ENCODE measurements at regions of chr1 and their contacts with region 1.

Region 1: DNA sequence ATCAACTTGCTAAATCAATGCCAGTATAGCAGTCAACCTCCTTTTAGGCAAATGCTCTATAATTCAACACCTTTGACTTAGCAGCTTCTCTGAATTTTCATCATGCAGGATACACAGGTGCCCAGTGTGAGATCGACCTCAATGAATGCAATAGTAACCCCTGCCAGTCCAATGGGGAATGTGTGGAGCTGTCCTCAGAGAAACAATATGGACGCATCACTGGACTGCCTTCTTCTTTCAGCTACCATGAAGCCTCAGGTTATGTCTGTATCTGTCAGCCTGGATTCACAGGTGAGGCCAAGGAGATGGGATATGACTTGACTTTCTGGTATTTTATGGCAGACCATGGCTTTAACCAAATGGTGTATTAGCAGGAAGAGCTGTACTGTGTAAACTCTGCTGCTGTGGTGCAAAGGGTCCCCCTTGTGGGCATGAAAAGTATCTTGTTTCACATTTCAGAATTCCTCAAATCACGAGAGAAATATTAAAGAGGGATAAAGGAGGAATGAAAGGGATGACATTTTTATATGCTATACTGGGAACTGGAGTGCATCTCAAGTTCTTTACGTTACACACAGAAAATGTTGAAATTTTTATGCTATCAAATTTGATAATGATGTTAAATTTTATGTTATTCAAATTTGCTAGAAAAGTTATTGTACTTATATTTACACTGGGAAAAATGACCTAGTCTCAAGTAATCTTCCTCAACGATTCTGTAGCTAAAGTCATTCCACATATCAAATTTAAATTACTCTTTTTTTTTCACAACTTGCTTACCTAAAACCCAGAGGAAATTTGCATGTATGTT is 88.9 kb downstream of the CRB1 start:
- DNase-seq: peak; percentile 45
- ATAC-seq: peak; percentile 70
- H3K4me3 Mint-ChIP-seq: no peak overlapping the region
- H3K27ac Mint-ChIP-seq: no peak overlapping the region
- H3K4me1 Mint-ChIP-seq: no peaks in the 10 kb centered on the region
- H3K27me3 Mint-ChIP-seq: no peaks in the 10 kb centered on the region

Region 2: DNA sequence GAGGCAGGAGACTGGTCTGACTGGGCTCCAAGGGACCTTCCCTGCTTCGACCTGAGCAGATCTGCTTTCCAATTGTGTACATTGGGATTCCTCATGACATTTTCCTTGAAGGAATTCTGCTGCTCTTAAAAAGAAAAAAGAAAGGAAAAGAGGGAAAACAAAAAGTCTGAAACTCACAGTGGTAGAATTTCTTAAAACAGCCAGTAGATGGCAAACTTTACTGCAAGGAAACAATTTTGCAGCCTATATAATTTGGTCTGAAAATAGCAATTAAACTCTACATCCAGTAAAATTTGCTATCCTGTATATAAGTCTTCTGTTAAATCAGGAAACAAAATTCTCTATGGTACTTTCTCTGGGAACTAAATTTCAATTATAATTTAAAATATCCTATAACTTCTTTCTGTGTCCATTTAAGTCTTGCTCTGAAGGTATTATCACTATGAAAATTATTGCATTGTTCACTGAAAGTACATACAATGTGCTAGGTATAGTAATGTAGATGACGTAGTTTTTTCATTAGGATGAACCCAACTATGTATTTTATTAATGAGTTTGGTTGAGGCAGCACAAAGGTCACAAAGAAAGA is 29.1 kb before region 1 on chr1:
- CTCF ChIA-PET with region 1: interaction called, 39 read pairs
- POLR2A ChIA-PET with region 1: no interaction called
- DNase-seq: no peak
- ATAC-seq: no peak
- H3K4me3 Mint-ChIP-seq: no peak overlapping the region
- H3K27ac Mint-ChIP-seq: no peak overlapping the region
- H3K4me1 Mint-ChIP-seq: no peaks in the 10 kb centered on the region
- H3K27me3 Mint-ChIP-seq: peaks cover 10% of the 10 kb centered on the region

Region 3: DNA sequence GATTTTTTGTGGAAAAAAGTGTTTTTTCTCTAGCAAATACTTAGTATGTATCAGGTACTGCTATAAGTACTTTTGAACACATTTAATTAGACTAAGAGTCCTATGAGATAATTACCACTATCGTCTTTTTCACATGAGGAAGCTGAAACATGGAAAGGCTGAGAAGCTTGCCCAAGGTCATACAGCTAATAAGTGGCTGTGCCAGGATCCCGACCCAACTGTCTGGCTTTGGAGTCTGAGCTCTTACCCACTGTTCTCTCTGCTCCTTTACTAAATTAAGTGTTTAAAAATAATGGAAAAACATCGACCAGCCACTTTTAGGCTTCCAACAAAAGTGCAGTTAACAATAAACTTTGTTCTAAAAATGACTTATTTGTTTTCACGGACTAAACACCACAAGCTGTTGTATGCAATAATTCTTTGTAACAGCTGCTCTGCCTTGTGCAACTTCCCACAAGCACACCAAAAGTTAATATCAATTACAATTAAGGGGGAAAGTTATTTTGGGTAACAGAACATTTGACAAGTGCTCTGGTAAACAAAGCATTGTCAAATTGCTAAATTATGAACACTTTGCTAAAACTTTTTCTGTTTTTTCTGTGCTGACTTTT is 13.2 kb before region 1 on chr1:
- CTCF ChIA-PET with region 1: interaction called, 11 read pairs
- POLR2A ChIA-PET with region 1: no interaction called
- DNase-seq: no peak
- ATAC-seq: no peak
- H3K4me3 Mint-ChIP-seq: no peak overlapping the region
- H3K27ac Mint-ChIP-seq: no peak overlapping the region
- H3K4me1 Mint-ChIP-seq: peaks cover 15% of the 10 kb centered on the region
- H3K27me3 Mint-ChIP-seq: peaks cover 7% of the 10 kb centered on the region

Region 4: GRCh38 chr1:197567442-197567841 is 210.5 kb after region 1 on chr1:
- CTCF ChIA-PET with region 1: no interaction called
- POLR2A ChIA-PET with region 1: no interaction called
- DNase-seq: no peak
- ATAC-seq: no peak
- H3K4me3 Mint-ChIP-seq: no peak overlapping the region
- H3K27ac Mint-ChIP-seq: no peak overlapping the region
- H3K4me1 Mint-ChIP-seq: no peaks in the 10 kb centered on the region
- H3K27me3 Mint-ChIP-seq: no peaks in the 10 kb centered on the region

Measured in activated CD8-positive, alpha-beta T cell treated with anti-CD3 and anti-CD28 coated beads, Interleukin-2, amount 10 ng/mL, durations not matched to agents 7 days and 5 days (primary cell).